Psoas muscle (tissue), 8 donors: ENCODE measurements at regions of chr11 and their contacts with region 1.

Region 1: DNA sequence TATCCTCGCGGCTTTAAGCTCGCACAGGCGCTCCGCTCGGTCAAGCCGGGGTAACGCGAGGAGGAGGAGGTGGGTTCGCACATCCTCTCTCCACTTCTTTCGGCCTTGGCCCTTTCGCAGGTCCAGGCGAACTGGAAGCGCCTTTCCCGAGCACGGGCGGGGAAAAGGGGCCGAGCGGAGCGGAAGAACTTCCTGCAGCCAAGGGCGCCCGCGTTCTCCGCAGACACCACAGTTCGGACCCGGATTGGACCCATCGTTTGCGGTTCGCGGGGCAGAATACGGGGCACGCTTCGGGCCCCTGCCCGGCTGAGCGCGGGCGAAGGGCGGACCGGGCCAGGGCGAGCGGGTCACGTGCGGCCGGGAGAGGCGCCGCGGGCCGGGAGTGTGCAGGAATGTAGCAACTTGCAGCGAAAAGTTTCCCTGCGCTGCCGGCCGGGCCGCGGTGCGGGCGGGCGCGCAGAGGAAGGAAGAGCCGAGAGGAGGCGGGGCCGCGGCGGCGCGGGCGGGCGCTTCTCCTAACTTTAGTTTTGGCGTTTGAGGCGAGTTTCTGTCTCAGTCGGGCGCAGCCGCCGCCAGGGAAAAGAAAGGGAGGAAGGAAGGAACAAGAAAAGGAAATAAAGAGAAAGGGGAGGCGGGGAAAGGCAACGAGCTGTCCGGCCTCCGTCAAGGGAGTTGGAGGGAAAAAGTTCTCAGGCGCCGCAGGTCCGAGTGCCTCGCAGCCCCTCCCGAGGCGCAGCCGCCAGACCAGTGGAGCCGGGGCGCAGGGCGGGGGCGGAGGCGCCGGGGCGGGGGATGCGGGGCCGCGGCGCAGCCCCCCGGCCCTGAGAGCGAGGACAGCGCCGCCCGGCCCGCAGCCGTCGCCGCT is at the start of gene YAP1:
- DNase-seq: peak; percentile 94 to 95
- ATAC-seq: peak; percentile 84 to 88 (median 86)
- H3K4me3 ChIP-seq: peak within 1 kb of the TSS; percentile 91
- H3K27ac ChIP-seq: peak within 1 kb of the TSS; percentile 94
- H3K4me1 ChIP-seq: peaks cover 24% of the 10 kb centered on the region
- H3K27me3 ChIP-seq: no peaks in the 10 kb centered on the region
- CTCF ChIP-seq: no peak
- total RNA-seq, gene YAP1: 28.6 to 124 (median 82.3) TPM

Region 2: GRCh38 chr11:102157219-102157618 is 47.1 kb after region 1 on chr11:
- intact Hi-C with region 1: loop called (anchors 5 kb)
- DNase-seq: peak; percentile 33 to 62
- ATAC-seq: peak; percentile 69 to 90 (median 86)
- H3K4me3 ChIP-seq: no peak overlapping the region
- H3K27ac ChIP-seq: peak overlapping the region; percentile 71
- H3K4me1 ChIP-seq: peaks cover 46% of the 10 kb centered on the region
- H3K27me3 ChIP-seq: no peaks in the 10 kb centered on the region
- CTCF ChIP-seq: no peak

Region 3: DNA sequence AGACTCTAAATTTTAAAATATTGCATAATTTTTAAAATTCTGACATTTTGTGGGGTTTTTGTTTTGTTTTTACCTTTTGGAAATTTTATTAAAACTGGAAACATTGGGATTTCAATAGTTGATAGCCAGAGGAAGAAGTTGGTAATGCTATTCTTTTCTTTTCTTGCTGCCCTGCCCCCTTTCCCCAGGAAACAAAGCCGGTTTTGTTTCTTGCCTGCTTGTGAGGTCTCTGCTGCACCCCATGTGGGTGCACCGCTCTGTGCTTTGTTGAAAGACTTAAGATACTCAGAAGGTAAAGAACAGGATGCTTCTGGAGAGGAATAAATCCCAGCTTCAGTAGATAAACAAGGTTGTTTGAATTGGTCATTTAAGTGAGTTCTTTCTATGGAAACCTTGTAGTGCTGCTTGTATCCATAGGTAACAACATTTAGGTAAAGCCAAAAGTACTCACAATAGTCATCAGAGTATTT is 87.6 kb after region 1 on chr11:
- intact Hi-C with region 1: loop called in 1 of 2 experiments (anchors 5 kb)
- DNase-seq: no peak
- ATAC-seq: no peak
- H3K4me3 ChIP-seq: no peak overlapping the region
- H3K27ac ChIP-seq: no peak overlapping the region
- H3K4me1 ChIP-seq: peaks cover 17% of the 10 kb centered on the region
- H3K27me3 ChIP-seq: no peaks in the 10 kb centered on the region
- CTCF ChIP-seq: no peak

Region 4: GRCh38 chr11:102268329-102269193 is 158.4 kb after region 1 on chr11:
- intact Hi-C with region 1: loop called (anchors 2 to 5 kb)
- DNase-seq: peak; percentile 80 to 92
- ATAC-seq: peak; percentile 98 to 99 (median 99)
- H3K4me3 ChIP-seq: peak overlapping the region; percentile 72
- H3K27ac ChIP-seq: peak overlapping the region; percentile 65
- H3K4me1 ChIP-seq: peaks cover 10% of the 10 kb centered on the region
- H3K27me3 ChIP-seq: peaks cover 0 to 7% (median 0%) of the 10 kb centered on the region in 3 donors
- CTCF ChIP-seq: peak; percentile 63